ENCODE measurements at regions of chr14 and their contacts with region 1.

Region 1: DNA sequence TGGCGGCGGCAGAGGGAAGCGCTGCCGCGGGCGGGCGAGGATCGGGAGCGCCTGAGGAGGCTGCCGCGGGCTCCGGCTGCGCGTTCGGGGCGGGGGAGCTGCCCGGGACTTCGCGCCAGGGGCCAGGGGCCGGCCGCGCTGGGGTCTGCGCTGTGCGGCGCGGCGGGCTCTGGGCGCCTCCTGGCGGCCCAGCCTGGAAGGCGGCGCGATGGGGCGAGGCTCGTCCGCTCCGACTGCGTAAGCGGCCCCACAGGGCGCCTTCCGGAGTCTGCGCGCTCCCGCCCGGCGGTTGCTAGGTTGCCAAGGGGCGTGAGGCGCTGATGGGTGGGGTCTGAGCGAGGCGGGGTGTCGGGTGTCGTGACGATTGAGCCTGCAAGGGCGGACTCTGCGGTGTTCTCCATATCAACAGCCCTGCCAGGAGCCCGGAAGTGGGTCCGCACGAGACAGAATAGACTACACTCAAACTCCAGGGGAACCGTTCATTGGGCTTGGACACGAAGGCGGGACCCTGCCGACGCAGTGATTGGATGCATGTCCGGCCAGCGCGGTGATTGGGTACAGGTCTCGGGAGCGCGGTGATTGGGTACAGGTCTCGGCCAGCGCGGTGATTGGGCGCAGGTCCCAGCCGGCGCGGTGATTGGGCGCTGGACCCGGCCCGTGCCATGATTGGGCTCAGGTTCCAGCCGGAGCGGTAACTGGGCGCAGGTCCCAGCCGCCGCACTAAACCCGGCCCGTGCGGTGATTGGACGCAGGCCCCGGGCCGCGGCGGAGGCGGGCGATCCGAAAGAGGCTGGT is at the start of gene TEDC1:
- DNase-seq: peak; percentile 100
- H3K4me3 Mint-ChIP-seq: peak within 1 kb of the TSS; percentile 78
- H3K27ac Mint-ChIP-seq: peak within 1 kb of the TSS; percentile 88
- H3K4me1 Mint-ChIP-seq: peaks cover 5% of the 10 kb centered on the region
- H3K27me3 Mint-ChIP-seq: no peaks in the 10 kb centered on the region
- CTCF ChIP-seq: peak; percentile 83
- total RNA-seq, gene TEDC1: 11.2 and 17.6 TPM in 2 replicates

Region 2: DNA sequence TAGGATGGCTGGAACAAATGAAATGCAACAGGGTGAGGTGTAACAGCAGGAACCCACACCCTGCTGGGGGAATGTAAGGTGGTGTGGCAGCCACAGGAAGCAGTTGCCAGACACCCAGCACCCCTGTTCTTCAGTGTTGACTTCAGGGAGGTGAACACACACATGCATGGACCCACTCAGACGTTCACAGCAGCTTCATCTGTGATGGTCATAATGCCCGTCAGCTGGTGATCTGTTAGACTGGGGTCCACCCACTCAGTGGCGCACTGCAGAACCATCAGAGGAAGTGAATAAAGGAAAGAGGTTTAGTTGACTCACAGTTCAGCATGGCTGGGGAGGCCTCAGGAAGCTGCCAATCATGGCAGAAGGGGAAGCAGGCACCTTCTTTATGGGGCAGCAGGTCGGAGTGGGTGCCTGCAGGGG is 115.1 kb before region 1 on chr14:
- CTCF ChIA-PET with region 1: interaction called, 38 read pairs
- POLR2A ChIA-PET with region 1: interaction called, 5 read pairs
- intact Hi-C with region 1: loop called (anchors 1 kb)
- DNase-seq: no peak
- H3K4me3 Mint-ChIP-seq: no peak overlapping the region
- H3K27ac Mint-ChIP-seq: no peak overlapping the region
- H3K4me1 Mint-ChIP-seq: no peaks in the 10 kb centered on the region
- H3K27me3 Mint-ChIP-seq: no peaks in the 10 kb centered on the region
- CTCF ChIP-seq: no peak

Region 3: DNA sequence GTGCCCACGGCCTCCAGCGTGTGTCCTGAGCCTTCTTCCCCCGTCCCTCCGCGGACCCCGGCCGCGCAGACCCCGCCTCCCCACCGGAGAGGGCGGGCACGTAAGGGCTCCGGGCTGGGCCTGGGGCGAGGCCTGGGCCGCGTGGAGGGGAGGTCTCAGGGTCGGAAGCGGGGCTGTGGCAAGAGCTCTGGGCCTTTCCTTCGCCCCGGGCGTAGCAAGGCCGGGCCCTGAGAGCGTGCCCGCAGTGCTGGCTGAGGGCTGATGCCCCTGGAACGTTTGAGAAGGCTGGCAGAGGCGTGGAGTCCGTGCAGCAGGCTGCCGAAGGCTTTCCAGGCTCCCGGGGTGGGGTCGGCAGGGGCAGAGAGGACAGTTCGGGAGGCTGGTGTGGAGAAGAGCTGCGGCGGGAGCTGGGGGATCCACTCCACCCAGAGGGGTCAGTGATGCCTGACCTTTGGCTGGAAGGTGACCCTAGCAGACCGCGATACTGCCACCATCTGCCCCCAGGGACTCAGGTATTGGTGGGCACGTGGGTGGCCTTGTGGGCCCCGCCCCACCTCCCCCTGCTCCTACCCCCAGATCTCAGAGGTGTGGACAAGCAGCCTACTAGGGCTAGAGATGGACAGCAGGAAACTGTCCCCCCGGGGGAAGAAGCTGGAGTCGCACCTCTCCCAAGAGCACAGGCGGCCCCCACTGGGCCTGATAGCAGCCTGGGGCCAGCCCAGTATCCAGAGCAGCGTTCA is 91.9 kb before region 1 on chr14:
- CTCF ChIA-PET with region 1: interaction called, 10 read pairs
- POLR2A ChIA-PET with region 1: interaction called, 4 read pairs
- intact Hi-C with region 1: no loop called
- DNase-seq: no peak
- H3K4me3 Mint-ChIP-seq: peak overlapping the region; percentile 72
- H3K27ac Mint-ChIP-seq: peak overlapping the region; percentile 63
- H3K4me1 Mint-ChIP-seq: no peaks in the 10 kb centered on the region
- H3K27me3 Mint-ChIP-seq: no peaks in the 10 kb centered on the region
- CTCF ChIP-seq: no peak

Region 4: GRCh38 chr14:105448706-105449111 is 42.1 kb before region 1 on chr14:
- CTCF ChIA-PET with region 1: interaction called, 3 read pairs
- POLR2A ChIA-PET with region 1: interaction called, 4 read pairs
- intact Hi-C with region 1: loop called (anchors 1 kb)
- DNase-seq: peak; percentile 48
- H3K4me3 Mint-ChIP-seq: no peak overlapping the region
- H3K27ac Mint-ChIP-seq: no peak overlapping the region
- H3K4me1 Mint-ChIP-seq: no peaks in the 10 kb centered on the region
- H3K27me3 Mint-ChIP-seq: no peaks in the 10 kb centered on the region
- CTCF ChIP-seq: peak; percentile 78

Region 5: GRCh38 chr14:105473677-105474482 is 16.9 kb before region 1 on chr14:
- CTCF ChIA-PET with region 1: interaction called, 16 read pairs
- POLR2A ChIA-PET with region 1: interaction called, 6 read pairs
- intact Hi-C with region 1: no loop called
- DNase-seq: peak; percentile 87
- H3K4me3 Mint-ChIP-seq: peak overlapping the region; percentile 73
- H3K27ac Mint-ChIP-seq: peak overlapping the region; percentile 66
- H3K4me1 Mint-ChIP-seq: peaks cover 9% of the 10 kb centered on the region
- H3K27me3 Mint-ChIP-seq: no peaks in the 10 kb centered on the region
- CTCF ChIP-seq: no peak

Region 6: DNA sequence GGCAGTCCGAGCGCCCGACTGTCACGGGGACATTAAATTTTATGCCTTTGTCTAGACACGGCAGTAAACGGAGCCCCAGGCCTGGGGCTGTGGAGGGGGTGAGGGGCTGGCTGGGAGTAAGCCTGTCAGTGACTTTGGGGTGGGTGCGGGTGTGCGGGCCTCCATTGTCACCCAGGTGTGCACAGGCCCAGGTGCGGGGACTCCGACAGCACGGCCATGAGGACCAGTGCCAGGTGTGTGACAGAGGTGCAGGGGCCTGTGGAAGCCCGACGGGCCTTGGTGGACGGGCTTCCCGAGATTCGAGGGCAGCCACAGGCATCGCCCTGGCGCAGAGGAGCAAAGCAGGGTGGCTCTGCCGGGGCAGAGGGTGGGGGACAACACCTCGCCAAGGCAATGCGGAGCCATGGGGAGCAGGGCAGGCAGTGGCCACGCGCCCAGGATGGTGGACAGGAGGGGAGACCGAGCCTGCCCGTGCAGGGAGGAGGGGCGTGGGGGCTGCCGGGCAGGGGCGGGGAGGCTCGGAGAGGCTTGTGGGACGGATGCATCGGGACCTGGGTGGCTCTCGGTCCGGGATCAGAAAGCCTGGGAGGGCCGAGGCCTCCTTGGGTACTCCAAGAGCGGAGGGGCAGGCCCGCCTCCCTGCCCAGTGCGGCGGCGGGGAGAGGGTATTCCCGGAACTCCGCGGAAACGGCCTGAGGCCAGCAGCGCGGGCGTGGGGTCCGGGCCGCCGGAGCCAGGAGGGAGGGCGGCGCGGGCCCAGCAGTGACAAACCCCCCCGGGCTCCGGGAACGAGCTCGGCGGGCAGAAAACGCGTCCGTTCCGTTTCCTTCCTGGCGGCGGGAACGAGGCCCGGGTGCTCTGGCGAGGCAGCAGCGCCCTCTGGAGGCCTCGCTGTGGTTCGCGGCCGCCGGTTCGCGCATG is 37.2 kb after region 1 on chr14:
- CTCF ChIA-PET with region 1: interaction called, 3 read pairs
- POLR2A ChIA-PET with region 1: no interaction called
- intact Hi-C with region 1: loop called (anchors 2 kb)
- DNase-seq: peak; percentile 69
- H3K4me3 Mint-ChIP-seq: peak overlapping the region; percentile 65
- H3K27ac Mint-ChIP-seq: no peak overlapping the region
- H3K4me1 Mint-ChIP-seq: no peaks in the 10 kb centered on the region
- H3K27me3 Mint-ChIP-seq: peaks cover 6% of the 10 kb centered on the region
- CTCF ChIP-seq: peak; percentile 91